Heart left ventricle (tissue), 16 donors: ENCODE measurements at regions of chr3 and their contacts with region 1.

Region 1: GRCh38 chr3:121545574-121546455 is at the start of gene POLQ:
- DNase-seq: peak; percentile 87 to 93 (median 92)
- ATAC-seq: peak; percentile 98 to 99 (median 99)
- H3K4me3 ChIP-seq: peak within 1 kb of the TSS; percentile 33 to 80 (median 62)
- H3K27ac ChIP-seq: peak within 1 kb of the TSS; percentile 38 to 92 (median 68)
- H3K4me1 ChIP-seq: peaks cover 0 to 15% (median 6%) of the 10 kb centered on the region in 12 donors
- H3K27me3 ChIP-seq: no peaks in the 10 kb centered on the region
- CTCF ChIP-seq: no peak
- POLR2A ChIP-seq: no peak
- total RNA-seq, gene POLQ: 0.13 to 1.5 (median 0.39) TPM

Region 2: DNA sequence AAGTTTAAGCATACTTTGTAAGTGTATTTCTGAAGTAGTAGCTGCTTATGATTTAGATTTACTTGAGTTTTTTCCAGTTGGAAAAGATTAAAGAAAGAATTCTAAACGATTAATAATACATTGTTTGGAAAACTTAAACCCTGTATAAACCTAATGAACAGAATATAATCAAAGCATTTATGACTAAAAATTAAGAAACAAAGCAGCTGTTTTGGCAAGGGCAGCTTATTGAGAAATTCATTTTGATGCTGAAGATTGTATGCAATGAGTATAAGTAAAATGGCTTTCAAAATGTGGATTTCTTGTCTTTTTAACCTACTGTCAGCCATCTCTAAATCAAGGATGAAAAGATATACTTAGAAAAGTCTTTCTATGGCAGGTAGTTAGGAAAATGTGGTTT is 140.2 kb before region 1 on chr3:
- intact Hi-C with region 1: no loop called
- DNase-seq: no peak
- ATAC-seq: no peak
- H3K4me3 ChIP-seq: no peak overlapping the region
- H3K27ac ChIP-seq: no peak overlapping the region
- H3K4me1 ChIP-seq: no peaks in the 10 kb centered on the region
- H3K27me3 ChIP-seq: peaks cover 0 to 9% (median 0%) of the 10 kb centered on the region in 9 donors
- CTCF ChIP-seq: no peak
- POLR2A ChIP-seq: no peak

Region 3: GRCh38 chr3:121601212-121601812 is 55.5 kb after region 1 on chr3:
- intact Hi-C with region 1: no loop called
- DNase-seq: no peak
- ATAC-seq: peak; percentile 80 to 84 (median 84)
- H3K4me3 ChIP-seq: peak overlapping the region in 4 of 12 donors; percentile 12 to 27 (median 20)
- H3K27ac ChIP-seq: peak overlapping the region; percentile 46 to 90 (median 80)
- H3K4me1 ChIP-seq: peaks cover 0 to 76% (median 28%) of the 10 kb centered on the region in 12 donors
- H3K27me3 ChIP-seq: no peaks in the 10 kb centered on the region
- CTCF ChIP-seq: no peak
- POLR2A ChIP-seq: no peak

Region 4: GRCh38 chr3:121619691-121620090 is 73.9 kb after region 1 on chr3:
- intact Hi-C with region 1: no loop called
- DNase-seq: no peak
- ATAC-seq: no peak
- H3K4me3 ChIP-seq: no peak overlapping the region
- H3K27ac ChIP-seq: no peak overlapping the region
- H3K4me1 ChIP-seq: peaks cover 0 to 17% (median 2%) of the 10 kb centered on the region in 12 donors
- H3K27me3 ChIP-seq: no peaks in the 10 kb centered on the region
- CTCF ChIP-seq: no peak
- POLR2A ChIP-seq: no peak

Region 5: GRCh38 chr3:121654493-121655385 is 108.9 kb after region 1 on chr3:
- intact Hi-C with region 1: loop called in 7 of 10 experiments (anchors 2 to 10 kb)
- DNase-seq: no peak
- ATAC-seq: no peak
- H3K4me3 ChIP-seq: no peak overlapping the region
- H3K27ac ChIP-seq: peak overlapping the region in 1 of 12 donors; percentile 18
- H3K4me1 ChIP-seq: peaks cover 0 to 50% (median 8%) of the 10 kb centered on the region in 12 donors
- H3K27me3 ChIP-seq: no peaks in the 10 kb centered on the region
- CTCF ChIP-seq: no peak
- POLR2A ChIP-seq: no peak

Region 6: GRCh38 chr3:121834696-121835464 is 289.1 kb after region 1 on chr3 and contains the starts of genes EAF2 and IQCB1:
- intact Hi-C with region 1: loop called in 3 of 10 experiments (anchors 10 kb)
- DNase-seq: peak; percentile 95 to 98 (median 97)
- ATAC-seq: peak; percentile 100
- H3K4me3 ChIP-seq: peak within 1 kb of the TSS; percentile 65 to 88 (median 78)
- H3K27ac ChIP-seq: peak within 1 kb of the TSS in 11 of 12 donors; percentile 45 to 88 (median 79)
- H3K4me1 ChIP-seq: peaks cover 0 to 27% (median 11%) of the 10 kb centered on the region in 12 donors
- H3K27me3 ChIP-seq: no peaks in the 10 kb centered on the region
- CTCF ChIP-seq: peak in 1 of 12 donors; percentile 10
- POLR2A ChIP-seq: peak; percentile 63 to 97
- total RNA-seq, gene EAF2: 0.95 to 6.3 (median 3.7) TPM
- total RNA-seq, gene IQCB1: 5.3 to 10.3 (median 6.6) TPM

Region 7: GRCh38 chr3:122258757-122259371 is 713.0 kb after region 1 on chr3:
- intact Hi-C with region 1: loop called in 9 of 10 experiments (anchors 2 to 10 kb)
- DNase-seq: peak; percentile 50 to 77 (median 67)
- ATAC-seq: peak; percentile 67 to 94 (median 90)
- H3K4me3 ChIP-seq: no peak overlapping the region
- H3K27ac ChIP-seq: no peak overlapping the region
- H3K4me1 ChIP-seq: peaks cover 0 to 32% (median 4%) of the 10 kb centered on the region in 12 donors
- H3K27me3 ChIP-seq: no peaks in the 10 kb centered on the region
- CTCF ChIP-seq: peak; percentile 32 to 67 (median 54)
- POLR2A ChIP-seq: no peak

Region 8: DNA sequence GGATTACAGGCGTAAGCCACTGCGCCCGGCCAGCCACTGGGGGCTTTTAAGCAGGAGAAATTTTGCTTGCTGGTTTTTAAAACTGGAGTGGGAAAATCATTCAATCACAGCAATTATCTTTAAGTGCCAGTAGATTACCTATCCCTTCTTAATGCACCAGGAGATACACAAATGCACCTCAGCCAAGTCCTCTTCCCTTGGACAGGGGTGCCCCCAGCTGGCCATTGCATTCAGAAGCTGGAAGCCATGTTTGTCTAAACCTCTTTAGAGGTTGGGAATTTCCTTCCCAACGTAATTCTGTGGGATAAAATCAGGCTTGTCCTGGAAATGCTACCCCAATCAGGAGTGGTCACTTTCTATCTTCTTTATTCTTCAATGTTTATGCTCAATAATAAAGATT is 810.6 kb after region 1 on chr3:
- intact Hi-C with region 1: loop called in 3 of 10 experiments (anchors 5 to 10 kb)
- DNase-seq: no peak
- ATAC-seq: no peak
- H3K4me3 ChIP-seq: no peak overlapping the region
- H3K27ac ChIP-seq: no peak overlapping the region
- H3K4me1 ChIP-seq: peaks cover 0 to 6% (median 0%) of the 10 kb centered on the region in 12 donors
- H3K27me3 ChIP-seq: no peaks in the 10 kb centered on the region
- CTCF ChIP-seq: peak in 6 of 12 donors; percentile 17 to 46 (median 36)
- POLR2A ChIP-seq: no peak

Region 9: GRCh38 chr3:122383771-122384697 is 838.2 kb after region 1 on chr3 and contains the start of gene FAM162A:
- intact Hi-C with region 1: loop called in 1 of 10 experiments (anchors 10 kb)
- DNase-seq: peak; percentile 94 to 97 (median 96)
- ATAC-seq: peak; percentile 97 to 98 (median 98)
- H3K4me3 ChIP-seq: peak within 1 kb of the TSS; percentile 63 to 94 (median 72)
- H3K27ac ChIP-seq: peak within 1 kb of the TSS; percentile 49 to 94 (median 90)
- H3K4me1 ChIP-seq: peaks cover 0 to 44% (median 12%) of the 10 kb centered on the region in 12 donors
- H3K27me3 ChIP-seq: no peaks in the 10 kb centered on the region
- CTCF ChIP-seq: peak; percentile 35 to 89 (median 57)
- POLR2A ChIP-seq: peak in 1 of 2 donors; percentile 95
- total RNA-seq, gene FAM162A: 46.7 to 135 (median 108) TPM

Region 10: GRCh38 chr3:122443090-122443489 is 897.3 kb after region 1 on chr3:
- intact Hi-C with region 1: no loop called
- DNase-seq: no peak
- ATAC-seq: no peak
- H3K4me3 ChIP-seq: no peak overlapping the region
- H3K27ac ChIP-seq: no peak overlapping the region
- H3K4me1 ChIP-seq: peaks cover 0 to 3% (median 0%) of the 10 kb centered on the region in 12 donors
- H3K27me3 ChIP-seq: no peaks in the 10 kb centered on the region
- CTCF ChIP-seq: no peak
- POLR2A ChIP-seq: no peak